ENCODE measurements at regions of chr2 and their contacts with region 1.

Region 1: DNA sequence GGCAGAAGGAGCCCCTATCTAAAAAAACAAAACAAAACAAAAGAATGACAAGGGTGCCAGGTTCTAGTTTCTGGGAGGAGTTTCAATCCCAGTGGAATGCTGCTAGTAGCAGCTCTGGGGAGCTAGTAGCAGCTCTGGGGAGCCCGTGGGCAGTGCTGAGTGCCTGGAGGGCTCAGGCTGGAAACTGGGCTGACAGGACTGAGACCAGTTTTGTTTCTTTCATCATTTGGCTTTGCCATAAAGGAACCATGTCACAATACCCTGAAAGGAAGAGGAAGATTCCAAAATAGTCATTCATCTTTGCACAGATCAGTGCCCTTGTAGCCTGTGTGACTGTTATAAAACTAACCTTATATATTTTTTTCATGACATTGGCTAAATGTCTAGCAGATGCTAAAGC is 10.6 kb downstream of the MFSD6 start:
- DNase-seq: peak in 1 of 2 experiments; percentile 18
- H3K4me3 ChIP-seq: no peak overlapping the region
- H3K4me3 Mint-ChIP-seq: no peak overlapping the region
- H3K27ac Mint-ChIP-seq: no peak overlapping the region
- H3K4me1 ChIP-seq: no peaks in the 10 kb centered on the region
- H3K4me1 Mint-ChIP-seq: no peaks in the 10 kb centered on the region
- H3K27me3 ChIP-seq: no peaks in the 10 kb centered on the region
- H3K27me3 Mint-ChIP-seq: no peaks in the 10 kb centered on the region
- CTCF ChIP-seq: no peak

Region 2: DNA sequence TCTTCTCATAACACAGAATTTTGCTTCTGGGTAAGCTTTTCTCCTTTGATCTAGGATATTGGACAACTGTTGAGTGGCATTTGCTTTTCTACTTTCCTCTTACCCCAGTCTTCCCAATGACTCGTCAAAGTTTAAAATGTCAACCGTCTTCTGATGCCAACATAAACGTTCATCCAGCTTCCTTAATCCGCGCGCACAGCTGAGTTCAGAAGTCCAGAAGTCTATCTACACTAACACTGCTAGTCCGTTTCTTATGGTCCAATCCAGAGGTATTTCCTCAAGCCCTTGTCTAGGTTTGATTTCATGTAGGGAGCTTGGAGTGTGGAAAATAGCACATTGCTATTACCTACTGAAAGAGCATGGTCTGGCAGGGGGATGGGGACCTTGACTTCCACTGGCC is 38.1 kb after region 1 on chr2:
- CTCF ChIA-PET with region 1: no interaction called
- POLR2A ChIA-PET with region 1: no interaction called
- intact Hi-C with region 1: loop called (anchors 2 kb)
- DNase-seq: no peak
- H3K4me3 ChIP-seq: no peak overlapping the region
- H3K4me3 Mint-ChIP-seq: no peak overlapping the region
- H3K27ac Mint-ChIP-seq: no peak overlapping the region
- H3K4me1 ChIP-seq: no peaks in the 10 kb centered on the region
- H3K4me1 Mint-ChIP-seq: no peaks in the 10 kb centered on the region
- H3K27me3 ChIP-seq: no peaks in the 10 kb centered on the region
- H3K27me3 Mint-ChIP-seq: no peaks in the 10 kb centered on the region
- CTCF ChIP-seq: no peak

Region 3: GRCh38 chr2:190534310-190535120 is 115.8 kb after region 1 on chr2 and contains the start of gene NEMP2:
- CTCF ChIA-PET with region 1: no interaction called
- POLR2A ChIA-PET with region 1: no interaction called
- intact Hi-C with region 1: no loop called
- DNase-seq: peak; percentile 92 to 93
- H3K4me3 ChIP-seq: peak within 1 kb of the TSS; percentile 72
- H3K4me3 Mint-ChIP-seq: peak within 1 kb of the TSS; percentile 81
- H3K27ac Mint-ChIP-seq: peak within 1 kb of the TSS; percentile 87
- H3K4me1 ChIP-seq: peaks cover 29% of the 10 kb centered on the region
- H3K4me1 Mint-ChIP-seq: peaks cover 25% of the 10 kb centered on the region
- H3K27me3 ChIP-seq: no peaks in the 10 kb centered on the region
- H3K27me3 Mint-ChIP-seq: no peaks in the 10 kb centered on the region
- CTCF ChIP-seq: no peak
- total RNA-seq, gene NEMP2: 19.1 and 20.2 TPM in 2 replicates

Measured in Caco-2 (cell line).